AG04450 (cell line): ENCODE measurements at regions of chr3 and their contacts with region 1.

Region 1: GRCh38 chr3:68893600-68894239 is 38.6 kb downstream of the TAFA4 start:
- DNase-seq: no peak
- H3K4me3 ChIP-seq: no peak overlapping the region
- H3K27ac ChIP-seq: no peak overlapping the region
- H3K27me3 ChIP-seq: peaks cover 2% of the 10 kb centered on the region
- CTCF ChIP-seq: peak; percentile 44

Region 2: GRCh38 chr3:68504201-68504600 is 389.5 kb before region 1 on chr3:
- CTCF ChIA-PET with region 1: no interaction called
- POLR2A ChIA-PET with region 1: no interaction called
- DNase-seq: no peak
- H3K4me3 ChIP-seq: no peak overlapping the region
- H3K27ac ChIP-seq: no peak overlapping the region
- H3K27me3 ChIP-seq: no peaks in the 10 kb centered on the region
- CTCF ChIP-seq: no peak

Region 3: GRCh38 chr3:68773401-68773800 is 120.3 kb before region 1 on chr3:
- CTCF ChIA-PET with region 1: no interaction called
- POLR2A ChIA-PET with region 1: no interaction called
- DNase-seq: no peak
- H3K4me3 ChIP-seq: no peak overlapping the region
- H3K27ac ChIP-seq: no peak overlapping the region
- H3K27me3 ChIP-seq: no peaks in the 10 kb centered on the region
- CTCF ChIP-seq: no peak

Region 4: GRCh38 chr3:68972358-68972979 is 78.7 kb after region 1 on chr3:
- CTCF ChIA-PET with region 1: interaction called, 22 read pairs
- POLR2A ChIA-PET with region 1: no interaction called
- DNase-seq: no peak
- H3K4me3 ChIP-seq: no peak overlapping the region
- H3K27ac ChIP-seq: no peak overlapping the region
- H3K27me3 ChIP-seq: peaks cover 16% of the 10 kb centered on the region
- CTCF ChIP-seq: peak; percentile 80

Region 5: GRCh38 chr3:69084326-69085167 is 190.8 kb after region 1 on chr3 and contains the start of gene ARL6IP5:
- CTCF ChIA-PET with region 1: no interaction called
- POLR2A ChIA-PET with region 1: no interaction called
- DNase-seq: peak; percentile 86
- H3K4me3 ChIP-seq: peak within 1 kb of the TSS; percentile 95
- H3K27ac ChIP-seq: peak within 1 kb of the TSS; percentile 83
- H3K27me3 ChIP-seq: no peaks in the 10 kb centered on the region
- CTCF ChIP-seq: no peak
- polyA plus RNA-seq, gene ARL6IP5: 150 and 204 TPM in 2 replicates

Region 6: DNA sequence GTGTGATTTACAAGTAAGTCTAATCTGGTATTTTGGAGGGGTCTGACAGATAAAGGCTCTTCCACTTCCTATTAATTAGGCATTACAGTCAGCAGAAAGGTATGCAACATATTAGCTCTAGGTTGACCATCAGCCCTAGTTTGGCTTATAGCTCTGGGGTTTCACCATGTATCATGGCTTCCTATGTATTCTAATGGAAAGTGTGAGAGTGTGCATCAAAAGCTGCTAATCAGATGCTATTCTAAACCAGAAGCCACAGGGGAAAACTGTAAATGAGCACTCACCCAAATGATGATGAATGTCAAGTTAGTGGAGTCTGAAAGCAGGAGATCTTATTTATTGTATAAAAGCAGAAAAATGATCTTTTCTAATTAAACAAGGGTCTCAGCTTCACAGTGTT is 696.4 kb after region 1 on chr3:
- CTCF ChIA-PET with region 1: no interaction called
- POLR2A ChIA-PET with region 1: no interaction called
- DNase-seq: no peak
- H3K4me3 ChIP-seq: no peak overlapping the region
- H3K27ac ChIP-seq: no peak overlapping the region
- H3K27me3 ChIP-seq: peaks cover 4% of the 10 kb centered on the region
- CTCF ChIP-seq: no peak